IMR-90 (cell line): ENCODE measurements at regions of chr3 and their contacts with region 1.

Region 1: DNA sequence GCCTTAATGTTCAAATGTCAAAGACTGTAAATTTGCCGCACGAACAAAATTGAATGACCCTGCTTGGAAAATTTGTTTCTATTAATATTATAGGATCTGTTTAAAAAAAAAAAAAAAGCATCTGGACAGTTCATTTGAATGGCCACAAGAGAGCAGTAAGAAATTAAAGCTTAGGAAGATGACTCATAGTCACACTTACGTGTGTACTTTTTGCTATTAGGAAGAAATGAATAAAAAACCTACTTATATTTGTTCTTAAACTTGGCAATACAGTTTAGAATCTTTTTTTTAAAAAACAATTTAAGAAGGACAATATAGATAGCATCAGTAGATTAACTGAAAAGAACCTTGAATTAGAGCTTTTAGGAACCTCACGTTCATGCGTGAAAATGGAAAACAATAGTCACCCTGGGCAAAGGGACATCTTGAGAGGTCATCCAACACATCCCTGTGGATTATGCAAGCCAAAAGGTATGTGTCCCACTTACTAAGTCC is 621.8 kb downstream of the MECOM start:
- DNase-seq: peak; percentile 80
- ATAC-seq: peak; percentile 68
- H3K4me3 ChIP-seq: no peak overlapping the region
- H3K27ac ChIP-seq: no peak overlapping the region
- H3K4me1 ChIP-seq: peaks cover 2% of the 10 kb centered on the region; the same call in 1 of the 2 replicates
- H3K27me3 ChIP-seq: no peaks in the 10 kb centered on the region
- CTCF ChIP-seq: peak; percentile 74
- POLR2A ChIP-seq: no peak
- RAD21 ChIP-seq: peak; percentile 63

Region 2: DNA sequence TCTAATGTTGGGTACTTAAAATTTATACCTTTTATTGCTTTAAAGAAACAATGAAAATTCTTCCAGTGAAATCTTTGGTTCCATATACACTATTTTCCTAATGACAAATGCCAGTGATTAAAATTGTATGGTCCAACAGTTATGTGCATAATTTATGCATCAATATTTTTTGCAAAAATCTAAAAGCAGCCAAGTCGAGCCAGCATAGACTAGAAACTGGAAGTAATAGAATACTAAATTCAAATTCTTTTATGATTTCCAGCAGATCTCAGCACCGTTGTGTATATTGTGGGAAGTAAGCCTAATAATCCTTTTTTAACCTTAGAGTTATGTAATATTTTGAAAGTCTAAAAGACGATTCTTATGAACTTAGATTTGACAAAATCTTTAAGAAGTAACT is 294.0 kb before region 1 on chr3:
- CTCF ChIA-PET with region 1: no interaction called
- POLR2A ChIA-PET with region 1: no interaction called
- dilution Hi-C with region 1: no loop called
- in situ Hi-C with region 1: no loop called
- intact Hi-C with region 1: no loop called
- DNase-seq: no peak
- ATAC-seq: no peak
- H3K4me3 ChIP-seq: no peak overlapping the region
- H3K27ac ChIP-seq: no peak overlapping the region
- H3K4me1 ChIP-seq: no peaks in the 10 kb centered on the region
- H3K27me3 ChIP-seq: no peaks in the 10 kb centered on the region
- CTCF ChIP-seq: no peak
- POLR2A ChIP-seq: no peak
- RAD21 ChIP-seq: no peak

Region 3: DNA sequence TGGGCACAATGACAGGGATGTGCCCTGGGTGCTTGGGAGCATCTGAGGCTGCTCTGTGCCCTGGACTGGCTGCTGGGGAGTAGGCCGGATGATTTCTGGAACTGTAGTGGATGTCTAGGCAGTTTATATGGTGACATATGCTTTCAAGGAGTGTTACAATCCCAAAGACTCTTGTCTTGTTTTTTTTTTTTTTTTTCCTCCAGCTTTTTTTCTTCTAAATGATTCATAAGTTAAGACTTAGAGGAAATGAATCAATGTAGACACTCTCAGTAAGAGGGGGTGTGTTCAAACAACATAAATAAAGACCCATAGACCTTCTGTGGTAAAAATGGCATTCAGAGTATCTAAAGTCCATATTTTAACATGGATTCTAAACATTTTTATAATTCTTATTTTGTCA is 239.9 kb before region 1 on chr3:
- CTCF ChIA-PET with region 1: no interaction called
- POLR2A ChIA-PET with region 1: no interaction called
- dilution Hi-C with region 1: no loop called
- in situ Hi-C with region 1: no loop called
- intact Hi-C with region 1: no loop called
- DNase-seq: peak; percentile 80
- ATAC-seq: peak; percentile 91
- H3K4me3 ChIP-seq: no peak overlapping the region
- H3K27ac ChIP-seq: peak overlapping the region; percentile 74
- H3K4me1 ChIP-seq: peaks cover 11% of the 10 kb centered on the region
- H3K27me3 ChIP-seq: no peaks in the 10 kb centered on the region
- CTCF ChIP-seq: no peak
- POLR2A ChIP-seq: no peak
- RAD21 ChIP-seq: no peak

Region 4: GRCh38 chr3:169085827-169086226 is 44.1 kb after region 1 on chr3:
- CTCF ChIA-PET with region 1: no interaction called
- POLR2A ChIA-PET with region 1: no interaction called
- dilution Hi-C with region 1: no loop called
- in situ Hi-C with region 1: no loop called
- intact Hi-C with region 1: no loop called
- DNase-seq: peak; percentile 94
- ATAC-seq: peak; percentile 93
- H3K4me3 ChIP-seq: no peak overlapping the region
- H3K27ac ChIP-seq: peak overlapping the region; percentile 22; the same call in 1 of the 2 replicates
- H3K4me1 ChIP-seq: peaks cover 8% of the 10 kb centered on the region
- H3K27me3 ChIP-seq: no peaks in the 10 kb centered on the region
- CTCF ChIP-seq: no peak
- POLR2A ChIP-seq: no peak
- RAD21 ChIP-seq: no peak

Region 5: DNA sequence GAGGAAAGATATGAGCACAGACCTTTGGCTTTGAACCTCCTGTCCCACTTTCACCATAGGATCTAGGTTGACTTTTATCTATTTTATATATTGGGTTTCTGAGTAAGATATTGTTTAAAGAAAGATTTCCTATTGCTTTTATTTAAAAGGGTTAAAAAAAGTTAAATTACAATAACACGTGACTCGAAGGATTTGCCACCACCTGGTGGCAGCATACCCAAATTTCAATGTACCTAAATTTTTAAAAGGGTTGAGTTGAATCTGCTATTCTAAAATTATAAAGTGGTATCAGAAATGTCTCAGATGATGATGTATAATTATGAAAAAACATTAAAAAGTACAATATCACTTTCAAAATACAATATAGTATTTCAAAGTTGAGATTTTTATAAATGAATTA is 253.4 kb after region 1 on chr3:
- CTCF ChIA-PET with region 1: no interaction called
- POLR2A ChIA-PET with region 1: no interaction called
- dilution Hi-C with region 1: no loop called
- in situ Hi-C with region 1: no loop called
- intact Hi-C with region 1: loop called (anchors 5 kb)
- DNase-seq: peak; percentile 42
- ATAC-seq: no peak
- H3K4me3 ChIP-seq: no peak overlapping the region
- H3K27ac ChIP-seq: no peak overlapping the region
- H3K4me1 ChIP-seq: no peaks in the 10 kb centered on the region
- H3K27me3 ChIP-seq: peaks cover 2% of the 10 kb centered on the region; the same call in 1 of the 2 replicates
- CTCF ChIP-seq: peak; percentile 66
- POLR2A ChIP-seq: no peak
- RAD21 ChIP-seq: peak; percentile 67